Psoas muscle (tissue), 8 donors: ENCODE measurements at regions of chr2 and their contacts with region 1.

Region 1: DNA sequence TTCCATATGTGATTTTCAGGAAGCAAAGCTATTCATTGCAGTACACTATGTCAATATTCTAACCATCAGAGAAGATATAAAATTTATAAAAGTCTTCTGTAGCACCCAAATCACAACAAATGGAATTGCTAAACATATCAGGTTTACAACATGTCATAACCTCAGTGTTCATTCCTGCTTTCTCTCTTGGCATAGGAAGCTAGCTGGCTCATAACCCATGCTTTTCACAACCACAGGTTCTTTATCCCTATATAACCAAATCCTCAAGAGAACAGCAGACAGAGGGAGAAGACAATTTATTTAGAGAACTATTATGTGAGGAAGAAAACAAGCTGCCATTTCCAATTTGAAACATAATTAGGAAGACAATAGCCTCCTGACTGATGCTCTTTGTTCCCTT is 997.0 kb upstream of the ACVR2A start:
- DNase-seq: no peak
- ATAC-seq: no peak
- H3K4me3 ChIP-seq: no peak overlapping the region
- H3K27ac ChIP-seq: no peak overlapping the region
- H3K4me1 ChIP-seq: no peaks in the 10 kb centered on the region
- H3K27me3 ChIP-seq: no peaks in the 10 kb centered on the region
- CTCF ChIP-seq: no peak

Region 2: GRCh38 chr2:147449323-147449991 is 601.6 kb after region 1 on chr2:
- intact Hi-C with region 1: loop called in 1 of 2 experiments (anchors 5 kb)
- DNase-seq: no peak
- ATAC-seq: no peak
- H3K4me3 ChIP-seq: no peak overlapping the region
- H3K27ac ChIP-seq: no peak overlapping the region
- H3K4me1 ChIP-seq: no peaks in the 10 kb centered on the region
- H3K27me3 ChIP-seq: no peaks in the 10 kb centered on the region
- CTCF ChIP-seq: no peak